A673 (cell line): ENCODE measurements at regions of chr6 and their contacts with region 1.

Region 1: DNA sequence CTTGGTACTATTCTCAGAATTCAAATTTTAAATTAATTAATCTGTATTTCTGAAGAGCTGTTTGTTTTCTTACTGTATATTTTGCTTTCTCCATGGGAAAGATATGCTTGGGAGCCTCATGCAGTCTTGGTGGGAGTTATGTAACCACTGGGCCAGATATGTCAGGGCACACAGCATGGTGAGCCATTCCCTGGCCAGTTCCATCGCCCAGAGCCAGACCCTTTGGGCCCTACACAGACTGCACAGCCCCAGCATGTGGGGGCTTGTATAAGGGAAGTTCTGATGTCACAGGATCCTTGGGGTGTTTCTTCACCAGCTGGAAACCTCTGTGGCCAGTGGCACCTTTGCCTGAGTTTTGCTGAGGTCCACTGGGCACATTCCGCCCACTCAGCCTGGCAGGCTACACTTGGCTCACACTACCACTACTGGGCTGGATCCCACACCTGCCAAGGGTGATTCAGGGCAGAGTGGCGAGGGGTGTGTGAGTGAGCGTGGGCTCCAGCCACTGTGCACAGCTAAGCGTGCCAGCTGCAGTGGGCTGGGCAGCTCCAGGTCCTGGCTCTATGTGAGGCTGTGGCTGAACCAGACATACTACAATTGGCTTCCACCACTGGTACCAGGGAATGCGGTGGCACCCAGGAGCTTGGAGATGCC is 293.5 kb downstream of the ARHGAP18 start:
- DNase-seq: no peak
- H3K4me3 ChIP-seq: no peak overlapping the region
- H3K27ac ChIP-seq: no peak overlapping the region
- H3K4me1 ChIP-seq: no peaks in the 10 kb centered on the region
- H3K27me3 ChIP-seq: no peaks in the 10 kb centered on the region
- CTCF ChIP-seq: no peak

Region 2: GRCh38 chr6:127879685-127880084 is 1536.8 kb before region 1 on chr6:
- CTCF ChIA-PET with region 1: no interaction called
- POLR2A ChIA-PET with region 1: interaction called, 10 read pairs
- intact Hi-C with region 1: no loop called
- DNase-seq: no peak
- H3K4me3 ChIP-seq: no peak overlapping the region
- H3K27ac ChIP-seq: no peak overlapping the region
- H3K4me1 ChIP-seq: no peaks in the 10 kb centered on the region
- H3K27me3 ChIP-seq: no peaks in the 10 kb centered on the region
- CTCF ChIP-seq: no peak